ENCODE measurements at regions of chr12 and their contacts with region 1.

Region 1: GRCh38 chr12:49515266-49515665 is 23.6 kb upstream of the KCNH3 start:
- DNase-seq: no peak
- H3K4me3 ChIP-seq: no peak overlapping the region
- H3K27ac ChIP-seq: no peak overlapping the region
- H3K4me1 ChIP-seq: no peaks in the 10 kb centered on the region
- H3K27me3 ChIP-seq: no peaks in the 10 kb centered on the region
- CTCF ChIP-seq: no peak
- POLR2A ChIP-seq: no peak

Region 2: DNA sequence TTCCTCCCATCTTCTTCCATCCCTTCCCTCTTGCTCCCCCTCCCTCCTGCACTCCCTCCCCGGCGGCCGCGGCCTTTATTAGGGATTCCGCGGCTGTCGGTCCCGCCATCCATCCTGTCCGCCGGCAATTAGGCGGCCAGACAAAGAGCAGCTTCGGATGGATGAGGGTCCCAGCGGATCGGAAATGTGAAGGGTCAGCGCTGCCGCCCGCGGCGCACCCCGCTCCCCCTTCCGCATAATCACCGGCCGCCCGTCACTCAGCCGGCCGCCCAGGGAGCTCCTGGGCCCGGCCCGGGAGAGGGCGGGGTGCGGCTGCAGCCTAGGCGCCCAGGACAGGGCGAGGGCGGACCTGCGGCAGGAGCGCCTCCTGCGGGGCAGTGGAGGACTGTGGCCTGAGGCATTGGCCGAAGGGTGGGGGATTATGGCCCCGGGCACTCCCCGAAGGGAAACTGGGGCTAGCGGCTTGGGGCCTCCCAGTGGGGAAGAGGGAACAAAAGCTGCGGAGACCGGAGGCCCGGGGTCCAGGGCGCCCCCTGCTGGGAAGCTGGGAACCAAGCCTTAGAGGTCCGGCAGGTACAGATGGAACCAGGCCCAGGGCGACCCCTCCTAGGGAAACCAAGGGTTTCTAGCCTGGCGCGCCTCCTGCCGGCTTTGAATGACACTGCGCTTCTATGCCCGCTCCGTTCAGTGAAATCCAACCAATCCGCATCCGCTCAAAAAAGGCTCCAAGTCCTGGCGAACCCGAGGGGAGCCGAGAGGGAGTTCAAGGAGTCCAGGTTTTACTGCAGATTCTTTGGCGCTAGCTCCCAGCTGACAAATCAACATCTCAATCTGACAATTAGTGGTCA is 173.0 kb before region 1 on chr12:
- intact Hi-C with region 1: loop called (anchors 10 kb)
- DNase-seq: no peak
- H3K4me3 ChIP-seq: peak overlapping the region; percentile 41 to 63 (median 42)
- H3K27ac ChIP-seq: no peak overlapping the region
- H3K4me1 ChIP-seq: peaks cover 15 to 20% of the 10 kb centered on the region in 2 donors
- H3K27me3 ChIP-seq: peaks cover 13 to 27% of the 10 kb centered on the region in 2 donors
- CTCF ChIP-seq: peak; percentile 42 to 63 (median 59)
- POLR2A ChIP-seq: no peak